ENCODE measurements at regions of chr1 and their contacts with region 1.

Region 1: DNA sequence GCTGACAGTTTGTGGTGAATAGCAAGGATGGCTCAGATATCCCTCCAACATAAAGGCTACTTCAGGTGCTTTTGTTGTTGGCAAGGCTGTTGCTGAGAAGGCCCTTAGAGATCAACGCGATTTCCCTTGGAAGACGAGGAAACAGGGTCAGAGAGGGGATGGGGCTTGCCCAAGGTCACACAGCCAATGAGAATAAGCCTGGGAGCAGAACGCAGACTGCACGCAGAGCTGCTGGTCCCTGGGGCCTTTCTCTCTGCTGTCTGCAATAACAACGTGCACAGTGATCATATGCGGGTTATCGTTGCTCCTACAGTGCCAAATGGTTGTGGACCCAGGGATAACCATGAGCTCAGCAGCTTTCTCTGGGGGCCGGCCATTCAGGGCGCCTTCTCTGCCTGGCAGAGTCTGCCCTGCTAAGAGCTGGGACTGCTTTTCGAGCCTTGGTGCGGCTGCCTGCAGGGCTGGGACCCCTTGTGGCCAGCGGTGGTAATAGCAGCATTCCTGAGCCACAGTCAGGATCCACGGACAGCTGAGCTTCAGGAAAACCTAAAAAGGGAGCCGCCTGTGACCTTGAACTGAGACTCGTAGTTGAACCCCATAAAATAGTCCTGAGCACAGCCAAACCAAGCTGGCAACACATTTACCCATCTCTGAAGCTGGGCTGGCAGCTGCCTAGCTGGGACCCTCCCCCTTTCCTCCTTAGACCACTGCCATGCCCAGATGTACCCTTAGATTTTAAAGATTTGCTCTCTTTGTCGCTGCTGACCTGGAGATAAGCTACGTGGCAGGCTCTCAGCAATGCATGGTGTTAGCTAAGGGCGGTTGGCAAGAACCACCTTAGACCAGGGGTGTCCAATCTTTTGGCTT is 39.8 kb downstream of the HTR6 start:
- DNase-seq: peak; percentile 79
- ATAC-seq: peak; percentile 91

Region 2: GRCh38 chr1:19661721-19662228 is 42.7 kb before region 1 on chr1:
- intact Hi-C with region 1: loop called (anchors 2 to 5 kb)
- DNase-seq: no peak
- ATAC-seq: no peak

Region 3: DNA sequence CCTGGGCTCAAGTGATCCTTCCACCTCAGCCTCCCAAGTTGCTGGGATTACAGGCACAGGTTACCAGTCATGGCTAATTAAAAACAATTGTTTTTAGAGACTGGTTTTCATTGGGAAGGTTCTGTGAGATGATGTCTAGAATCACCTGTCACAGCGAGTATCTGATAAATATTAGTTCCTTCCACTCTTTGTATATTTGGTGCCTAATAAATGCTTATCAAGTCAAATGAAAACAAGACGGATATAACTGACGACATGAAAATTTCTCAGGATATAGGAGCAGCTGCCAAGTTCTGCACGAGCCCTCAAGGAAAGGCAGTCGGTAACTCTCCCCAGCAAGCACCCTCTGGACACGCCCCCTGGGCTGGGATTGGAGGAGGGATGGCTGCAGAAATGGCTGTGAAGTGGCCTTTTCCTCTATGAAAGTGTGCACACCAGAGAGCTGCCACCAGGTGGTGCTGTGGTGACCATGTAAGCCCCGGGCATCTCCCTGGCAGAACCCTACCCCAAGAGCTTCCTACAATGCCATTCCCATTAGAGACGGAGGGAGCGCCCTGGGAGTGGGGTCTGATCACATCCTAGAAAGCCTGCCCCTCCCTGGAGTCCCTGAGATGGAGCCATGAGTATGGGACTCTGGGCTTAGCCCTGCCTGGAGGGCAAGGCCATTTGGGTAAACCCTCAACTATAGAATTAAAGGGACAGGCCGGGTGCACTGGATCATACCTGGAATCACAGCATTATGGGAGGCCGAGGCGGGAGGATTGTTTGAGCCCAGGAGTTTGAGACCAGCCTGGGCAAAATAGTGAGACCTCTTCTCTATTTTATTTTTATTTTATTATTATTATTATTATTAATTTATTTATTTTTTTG is 11.1 kb after region 1 on chr1:
- intact Hi-C with region 1: no loop called
- DNase-seq: peak; percentile 90
- ATAC-seq: peak; percentile 95 to 97